ENCODE measurements at regions of chr5 and their contacts with region 1.

Region 1: GRCh38 chr5:173615884-173616576 is 420 bp downstream of the BOD1 start:
- DNase-seq: peak; percentile 63
- ATAC-seq: peak; percentile 47
- H3K4me3 Mint-ChIP-seq: peak overlapping the region; percentile 92
- H3K27ac Mint-ChIP-seq: peak overlapping the region; percentile 88
- H3K4me1 Mint-ChIP-seq: peaks cover 41% of the 10 kb centered on the region
- H3K27me3 Mint-ChIP-seq: no peaks in the 10 kb centered on the region
- CTCF ChIP-seq: no peak

Region 2: DNA sequence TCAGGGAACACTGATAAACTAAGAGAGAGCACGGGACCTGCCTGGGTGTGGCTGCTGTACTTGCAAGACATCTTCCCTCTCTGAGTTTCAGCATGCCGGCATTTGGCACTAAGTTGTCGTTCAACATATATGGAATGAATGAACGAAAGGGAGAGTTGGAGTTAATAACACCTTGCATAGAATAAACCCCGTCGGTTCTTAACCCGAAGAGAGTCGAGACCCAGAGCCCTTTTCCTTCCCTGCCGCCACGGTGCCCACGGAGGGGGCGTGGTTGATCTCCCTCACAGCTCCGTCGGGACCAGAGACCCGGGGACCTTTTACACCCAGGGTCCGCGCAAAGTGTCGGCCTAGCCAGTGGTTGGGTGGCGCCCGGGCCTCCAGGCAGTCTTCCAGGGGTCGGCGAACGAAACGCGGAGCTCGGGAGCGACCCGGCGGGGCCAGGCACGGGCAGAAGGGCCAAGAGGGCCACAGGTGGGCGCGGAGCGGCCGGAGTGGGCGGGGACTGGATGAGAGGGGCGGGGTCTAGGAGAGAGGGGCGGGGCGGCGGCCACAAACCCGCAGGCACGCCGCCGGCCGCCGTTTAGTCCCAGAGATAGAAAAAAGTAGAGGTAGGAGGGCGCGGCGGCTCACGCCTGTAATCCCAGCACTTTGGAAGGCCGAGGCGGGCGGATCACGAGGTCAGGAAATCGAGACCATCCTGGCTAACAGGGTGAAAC is 657.5 kb before region 1 on chr5:
- CTCF ChIA-PET with region 1: no interaction called
- POLR2A ChIA-PET with region 1: no interaction called
- intact Hi-C with region 1: loop called (anchors 1 kb)
- DNase-seq: peak; percentile 64
- ATAC-seq: peak; percentile 76
- H3K4me3 Mint-ChIP-seq: peak overlapping the region; percentile 97
- H3K27ac Mint-ChIP-seq: peak overlapping the region; percentile 94
- H3K4me1 Mint-ChIP-seq: peaks cover 31% of the 10 kb centered on the region
- H3K27me3 Mint-ChIP-seq: no peaks in the 10 kb centered on the region
- CTCF ChIP-seq: no peak

Region 3: GRCh38 chr5:173144200-173145176 is 471.5 kb before region 1 on chr5 and contains the start of gene BNIP1:
- CTCF ChIA-PET with region 1: no interaction called
- POLR2A ChIA-PET with region 1: no interaction called
- intact Hi-C with region 1: loop called (anchors 1 kb)
- DNase-seq: peak; percentile 97
- ATAC-seq: peak; percentile 90
- H3K4me3 Mint-ChIP-seq: peak within 1 kb of the TSS; percentile 99
- H3K27ac Mint-ChIP-seq: peak within 1 kb of the TSS; percentile 97
- H3K4me1 Mint-ChIP-seq: peaks cover 12% of the 10 kb centered on the region
- H3K27me3 Mint-ChIP-seq: no peaks in the 10 kb centered on the region
- CTCF ChIP-seq: peak; percentile 54
- total RNA-seq, gene BNIP1: 17.9 and 20.2 TPM in 2 replicates

Region 4: GRCh38 chr5:173733831-173734501 is 117.9 kb after region 1 on chr5:
- CTCF ChIA-PET with region 1: no interaction called
- POLR2A ChIA-PET with region 1: interaction called, 3 read pairs
- intact Hi-C with region 1: loop called (anchors 5 kb)
- DNase-seq: peak; percentile 41
- ATAC-seq: peak; percentile 79
- H3K4me3 Mint-ChIP-seq: peak overlapping the region; percentile 58
- H3K27ac Mint-ChIP-seq: peak overlapping the region; percentile 90
- H3K4me1 Mint-ChIP-seq: peaks cover 64% of the 10 kb centered on the region
- H3K27me3 Mint-ChIP-seq: no peaks in the 10 kb centered on the region
- CTCF ChIP-seq: no peak

Region 5: DNA sequence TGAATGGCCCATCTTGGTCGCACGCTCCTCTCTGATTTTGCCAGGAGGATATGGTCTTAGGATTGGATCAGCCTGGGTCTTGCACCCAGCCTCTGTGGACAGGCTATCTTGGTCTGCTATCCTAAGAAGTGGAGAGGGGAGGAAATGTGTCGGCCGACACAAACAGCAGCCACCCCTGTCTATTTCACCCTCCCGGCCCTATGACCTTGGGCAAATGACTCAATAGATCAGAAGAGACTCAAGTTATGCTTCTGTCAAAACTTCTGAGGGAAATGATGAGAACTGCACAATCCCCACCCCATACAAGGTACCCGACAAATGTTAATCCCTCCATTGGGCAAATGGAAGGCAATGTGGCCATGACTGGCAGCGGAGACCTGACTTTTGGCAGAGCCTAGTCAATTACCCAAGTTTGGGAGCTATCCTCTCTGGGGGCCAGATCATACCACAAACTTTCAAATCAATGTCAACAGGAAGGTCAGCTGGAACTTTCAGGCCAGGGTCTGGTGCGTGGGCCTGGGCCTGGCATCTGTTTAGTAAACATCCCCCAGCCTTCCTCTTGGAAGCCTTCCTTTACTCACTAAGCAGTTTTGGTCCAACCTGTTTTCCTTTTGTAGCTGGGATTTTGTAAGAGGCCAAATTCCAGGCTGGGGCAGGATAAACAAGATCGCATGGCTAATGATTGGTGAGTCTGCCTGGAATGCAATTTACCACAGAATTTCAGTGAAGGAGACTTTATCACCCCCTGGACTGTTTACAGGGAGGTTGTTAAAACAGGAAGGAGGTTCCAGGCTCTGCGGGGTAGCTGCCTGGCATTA is 207.9 kb after region 1 on chr5:
- CTCF ChIA-PET with region 1: interaction called, 4 read pairs
- POLR2A ChIA-PET with region 1: no interaction called
- intact Hi-C with region 1: loop called (anchors 2 kb)
- DNase-seq: no peak
- ATAC-seq: no peak
- H3K4me3 Mint-ChIP-seq: no peak overlapping the region
- H3K27ac Mint-ChIP-seq: peak overlapping the region; percentile 42
- H3K4me1 Mint-ChIP-seq: peaks cover 86% of the 10 kb centered on the region
- H3K27me3 Mint-ChIP-seq: no peaks in the 10 kb centered on the region
- CTCF ChIP-seq: no peak

Region 6: GRCh38 chr5:173925448-173926071 is 309.5 kb after region 1 on chr5:
- CTCF ChIA-PET with region 1: interaction called, 93 read pairs
- POLR2A ChIA-PET with region 1: interaction called, 9 read pairs
- intact Hi-C with region 1: loop called (anchors 1 kb)
- DNase-seq: no peak
- ATAC-seq: peak; percentile 54
- H3K4me3 Mint-ChIP-seq: no peak overlapping the region
- H3K27ac Mint-ChIP-seq: no peak overlapping the region
- H3K4me1 Mint-ChIP-seq: peaks cover 25% of the 10 kb centered on the region
- H3K27me3 Mint-ChIP-seq: no peaks in the 10 kb centered on the region
- CTCF ChIP-seq: no peak

Measured in activated B cell treated with CpG ODN at 0.5 μM for 24 hours (primary cell).